ENCODE measurements at regions of chr1 and their contacts with region 1.

Region 1: GRCh38 chr1:248622570-248623001 is 12.3 kb downstream of the OR2T11 start:
- DNase-seq: no peak
- ATAC-seq: peak; percentile 68

Region 2: DNA sequence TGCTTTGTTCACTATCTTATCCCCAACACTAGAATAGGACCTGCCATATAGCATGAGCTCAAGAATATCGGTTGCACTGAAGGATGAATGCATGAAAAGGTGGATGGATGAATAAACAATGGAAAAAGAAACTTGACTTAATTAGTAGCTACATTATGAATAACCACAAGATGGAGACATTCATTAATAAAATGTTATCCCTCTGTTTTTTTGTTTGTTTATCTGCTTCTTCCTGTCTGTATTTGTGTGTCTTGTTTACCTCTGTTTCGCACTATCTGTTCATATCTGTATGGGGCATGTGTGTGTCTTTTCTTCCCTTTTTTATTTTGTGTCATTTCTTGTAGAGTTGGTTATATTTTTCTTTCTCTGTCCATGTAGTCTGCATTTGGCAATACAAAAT is 81.1 kb after region 1 on chr1:
- intact Hi-C with region 1: no loop called
- DNase-seq: no peak
- ATAC-seq: no peak

Region 3: GRCh38 chr1:248807067-248807737 is 184.6 kb after region 1 on chr1:
- intact Hi-C with region 1: loop called (anchors 2 kb)
- DNase-seq: peak; percentile 71
- ATAC-seq: peak; percentile 80

Region 4: GRCh38 chr1:248841702-248842395 is 219.3 kb after region 1 on chr1:
- intact Hi-C with region 1: no loop called
- DNase-seq: peak; percentile 60
- ATAC-seq: no peak

Measured in Right ventricle myocardium superior (tissue), 1 donor.